CD4-positive, alpha-beta memory T cell (primary cell): ENCODE measurements at regions of chr14 and their contacts with region 1.

Region 1: DNA sequence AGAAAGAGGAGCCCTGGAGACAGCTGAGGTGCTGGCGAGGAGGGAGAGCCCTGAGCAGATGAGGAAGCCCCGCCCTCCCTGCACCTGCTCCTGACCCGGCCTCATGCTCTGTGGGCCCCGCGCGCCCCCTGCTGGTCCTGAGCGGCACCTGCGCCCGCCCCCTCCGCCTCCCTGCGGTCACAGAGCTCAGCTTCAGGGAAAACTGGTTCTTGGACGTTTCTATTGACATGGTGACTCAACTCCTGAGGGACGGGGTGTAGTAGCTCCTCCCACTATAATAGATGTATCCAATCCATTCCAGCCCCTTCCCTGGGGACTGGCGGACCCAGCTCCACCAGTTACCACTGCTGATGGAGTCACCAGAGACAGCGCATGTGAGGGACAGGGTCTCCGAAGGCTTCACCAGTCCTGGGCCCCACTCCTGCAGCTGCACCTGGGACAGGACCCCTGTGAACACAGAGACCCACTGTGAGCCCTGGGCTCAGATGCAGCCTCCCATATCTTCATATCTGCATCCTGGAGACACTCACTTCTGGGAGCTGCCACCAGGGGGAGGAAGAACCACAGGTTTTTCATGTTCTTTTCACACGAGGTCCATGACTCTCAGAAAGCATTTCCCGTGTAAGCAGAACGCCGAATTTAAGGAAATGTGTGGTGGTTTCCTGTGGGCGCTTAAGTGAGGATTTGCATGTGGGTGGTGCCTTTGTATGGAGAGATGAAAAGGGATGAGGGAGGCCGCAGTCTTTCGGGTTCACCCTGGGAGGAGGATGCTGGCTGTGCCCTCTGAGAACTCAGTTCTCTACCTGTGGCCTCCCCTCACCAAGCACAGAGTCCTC is 1346.4 kb downstream of the TMEM121 start:
- DNase-seq: peak; percentile 75 to 80 (median 76)
- H3K4me3 ChIP-seq: no peak overlapping the region
- H3K4me3 Mint-ChIP-seq: peak overlapping the region in 6 of 8 donors; percentile 4 to 70 (median 60)
- H3K27ac ChIP-seq: no peak overlapping the region
- H3K27ac Mint-ChIP-seq: peak overlapping the region in 3 of 7 donors; percentile 22 to 75 (median 50)
- H3K4me1 ChIP-seq: peaks cover 11% of the 10 kb centered on the region
- H3K4me1 Mint-ChIP-seq: peaks cover 8 to 14% (median 11%) of the 10 kb centered on the region in 4 donors
- H3K27me3 ChIP-seq: peaks cover 5% of the 10 kb centered on the region
- H3K27me3 Mint-ChIP-seq: peaks cover 16 to 33% of the 10 kb centered on the region in 2 donors

Region 2: DNA sequence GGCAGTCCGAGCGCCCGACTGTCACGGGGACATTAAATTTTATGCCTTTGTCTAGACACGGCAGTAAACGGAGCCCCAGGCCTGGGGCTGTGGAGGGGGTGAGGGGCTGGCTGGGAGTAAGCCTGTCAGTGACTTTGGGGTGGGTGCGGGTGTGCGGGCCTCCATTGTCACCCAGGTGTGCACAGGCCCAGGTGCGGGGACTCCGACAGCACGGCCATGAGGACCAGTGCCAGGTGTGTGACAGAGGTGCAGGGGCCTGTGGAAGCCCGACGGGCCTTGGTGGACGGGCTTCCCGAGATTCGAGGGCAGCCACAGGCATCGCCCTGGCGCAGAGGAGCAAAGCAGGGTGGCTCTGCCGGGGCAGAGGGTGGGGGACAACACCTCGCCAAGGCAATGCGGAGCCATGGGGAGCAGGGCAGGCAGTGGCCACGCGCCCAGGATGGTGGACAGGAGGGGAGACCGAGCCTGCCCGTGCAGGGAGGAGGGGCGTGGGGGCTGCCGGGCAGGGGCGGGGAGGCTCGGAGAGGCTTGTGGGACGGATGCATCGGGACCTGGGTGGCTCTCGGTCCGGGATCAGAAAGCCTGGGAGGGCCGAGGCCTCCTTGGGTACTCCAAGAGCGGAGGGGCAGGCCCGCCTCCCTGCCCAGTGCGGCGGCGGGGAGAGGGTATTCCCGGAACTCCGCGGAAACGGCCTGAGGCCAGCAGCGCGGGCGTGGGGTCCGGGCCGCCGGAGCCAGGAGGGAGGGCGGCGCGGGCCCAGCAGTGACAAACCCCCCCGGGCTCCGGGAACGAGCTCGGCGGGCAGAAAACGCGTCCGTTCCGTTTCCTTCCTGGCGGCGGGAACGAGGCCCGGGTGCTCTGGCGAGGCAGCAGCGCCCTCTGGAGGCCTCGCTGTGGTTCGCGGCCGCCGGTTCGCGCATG is 1344.9 kb before region 1 on chr14:
- CTCF ChIA-PET with region 1: no interaction called
- POLR2A ChIA-PET with region 1: no interaction called
- intact Hi-C with region 1: no loop called
- DNase-seq: peak; percentile 69 to 83 (median 78)
- H3K4me3 ChIP-seq: peak overlapping the region in 1 of 2 donors; percentile 54
- H3K4me3 Mint-ChIP-seq: peak overlapping the region; percentile 27 to 84 (median 66)
- H3K27ac ChIP-seq: no peak overlapping the region
- H3K27ac Mint-ChIP-seq: peak overlapping the region in 4 of 7 donors; percentile 43 to 83 (median 57)
- H3K4me1 ChIP-seq: peaks cover 29% of the 10 kb centered on the region
- H3K4me1 Mint-ChIP-seq: peaks cover 4 to 41% (median 19%) of the 10 kb centered on the region in 4 donors
- H3K27me3 ChIP-seq: no peaks in the 10 kb centered on the region
- H3K27me3 Mint-ChIP-seq: peaks cover 1 to 2% of the 10 kb centered on the region in 2 donors

Region 3: DNA sequence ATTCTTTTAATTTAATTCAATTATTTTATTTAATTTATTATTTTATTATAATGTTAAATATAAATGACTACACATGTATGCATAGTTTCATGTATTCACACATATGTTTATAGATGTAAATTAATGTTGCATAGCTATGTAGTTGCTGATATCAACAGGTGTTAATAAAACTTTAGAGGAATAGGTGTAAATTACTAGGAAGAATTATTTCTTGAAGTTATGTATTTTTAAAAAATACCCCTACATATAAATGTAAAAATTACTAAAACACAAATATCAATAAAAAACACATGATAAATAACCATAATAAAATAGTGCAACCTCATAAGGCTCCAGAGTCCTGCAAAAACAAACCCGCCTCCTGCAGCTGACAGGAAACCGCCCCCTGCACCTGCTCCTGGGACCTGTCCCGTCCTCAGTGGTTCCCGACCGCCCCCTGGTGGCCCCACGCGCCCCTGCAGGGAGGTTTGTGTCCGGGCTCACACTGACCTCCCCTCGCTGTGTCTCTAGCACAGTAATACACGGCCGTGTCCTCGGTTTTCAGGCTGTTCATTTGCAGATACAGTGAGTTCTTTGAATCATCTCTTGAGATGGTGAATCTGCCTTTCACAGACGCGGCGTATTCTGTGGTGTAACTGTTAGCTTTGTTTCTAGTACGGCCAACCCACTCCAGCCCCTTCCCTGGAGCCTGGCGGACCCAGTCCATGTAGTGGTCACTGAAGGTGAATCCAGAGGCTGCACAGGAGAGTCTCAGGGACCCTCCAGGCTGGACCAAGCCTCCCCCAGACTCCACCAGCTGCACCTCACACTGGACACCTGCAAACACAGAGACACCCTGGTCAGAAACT is 82.4 kb before region 1 on chr14:
- CTCF ChIA-PET with region 1: interaction called, 19 read pairs
- POLR2A ChIA-PET with region 1: no interaction called
- intact Hi-C with region 1: no loop called
- DNase-seq: peak; percentile 47 to 70 (median 54)
- H3K4me3 ChIP-seq: no peak overlapping the region
- H3K4me3 Mint-ChIP-seq: no peak overlapping the region
- H3K27ac ChIP-seq: no peak overlapping the region
- H3K27ac Mint-ChIP-seq: no peak overlapping the region
- H3K4me1 ChIP-seq: peaks cover 10% of the 10 kb centered on the region
- H3K4me1 Mint-ChIP-seq: peaks cover 0 to 13% (median 7%) of the 10 kb centered on the region in 4 donors
- H3K27me3 ChIP-seq: peaks cover 4% of the 10 kb centered on the region
- H3K27me3 Mint-ChIP-seq: peaks cover 9 to 12% of the 10 kb centered on the region in 2 donors

Region 4: DNA sequence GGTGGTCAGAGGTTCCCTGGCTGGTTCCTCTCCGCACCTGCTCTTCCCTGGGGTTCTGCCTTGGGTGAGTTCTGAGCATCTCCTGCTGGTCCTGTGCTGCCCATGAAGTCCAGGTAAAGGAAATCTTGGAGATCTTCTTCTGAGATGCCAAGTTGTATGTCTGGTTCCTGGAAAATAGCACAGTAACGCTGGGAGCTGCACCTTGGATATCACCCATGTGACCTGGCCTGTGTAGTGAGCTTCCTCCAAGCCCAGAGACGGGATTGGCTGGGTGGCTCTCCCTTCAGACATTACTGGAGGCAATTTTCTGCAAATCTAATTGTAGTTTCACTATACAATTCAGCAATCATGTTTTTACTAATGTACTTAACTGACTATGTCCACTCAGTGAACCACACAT is 65.3 kb before region 1 on chr14:
- CTCF ChIA-PET with region 1: no interaction called
- POLR2A ChIA-PET with region 1: no interaction called
- intact Hi-C with region 1: no loop called
- DNase-seq: no peak
- H3K4me3 ChIP-seq: no peak overlapping the region
- H3K4me3 Mint-ChIP-seq: no peak overlapping the region
- H3K27ac ChIP-seq: no peak overlapping the region
- H3K27ac Mint-ChIP-seq: no peak overlapping the region
- H3K4me1 ChIP-seq: peaks cover 10% of the 10 kb centered on the region
- H3K4me1 Mint-ChIP-seq: peaks cover 6 to 11% (median 8%) of the 10 kb centered on the region in 4 donors
- H3K27me3 ChIP-seq: peaks cover 3% of the 10 kb centered on the region
- H3K27me3 Mint-ChIP-seq: peaks cover 10 to 24% of the 10 kb centered on the region in 2 donors

Region 5: DNA sequence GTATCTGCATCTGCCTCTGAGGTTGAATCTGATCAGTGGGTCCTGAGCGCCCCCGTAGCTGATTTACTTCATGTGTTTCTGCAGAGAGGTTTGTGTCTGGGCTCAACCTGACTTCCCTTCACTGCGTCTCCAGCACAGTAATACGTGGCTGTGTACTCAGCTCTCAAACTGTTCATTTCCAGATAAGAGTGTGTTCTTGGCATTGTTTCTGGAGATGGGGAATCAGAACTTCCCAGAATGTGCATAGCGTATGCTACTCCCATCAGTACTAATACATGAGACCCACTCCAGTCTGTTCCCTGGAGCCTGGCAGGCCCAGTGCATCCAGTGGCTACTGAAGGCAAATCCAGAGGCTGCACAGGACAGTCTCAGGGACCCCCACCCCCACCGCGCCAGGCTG is 49.3 kb before region 1 on chr14:
- CTCF ChIA-PET with region 1: interaction called, 11 read pairs
- POLR2A ChIA-PET with region 1: no interaction called
- intact Hi-C with region 1: no loop called
- DNase-seq: no peak
- H3K4me3 ChIP-seq: no peak overlapping the region
- H3K4me3 Mint-ChIP-seq: no peak overlapping the region
- H3K27ac ChIP-seq: no peak overlapping the region
- H3K27ac Mint-ChIP-seq: no peak overlapping the region
- H3K4me1 ChIP-seq: no peaks in the 10 kb centered on the region
- H3K4me1 Mint-ChIP-seq: no peaks in the 10 kb centered on the region
- H3K27me3 ChIP-seq: peaks cover 6% of the 10 kb centered on the region
- H3K27me3 Mint-ChIP-seq: peaks cover 12 to 27% of the 10 kb centered on the region in 2 donors

Region 6: DNA sequence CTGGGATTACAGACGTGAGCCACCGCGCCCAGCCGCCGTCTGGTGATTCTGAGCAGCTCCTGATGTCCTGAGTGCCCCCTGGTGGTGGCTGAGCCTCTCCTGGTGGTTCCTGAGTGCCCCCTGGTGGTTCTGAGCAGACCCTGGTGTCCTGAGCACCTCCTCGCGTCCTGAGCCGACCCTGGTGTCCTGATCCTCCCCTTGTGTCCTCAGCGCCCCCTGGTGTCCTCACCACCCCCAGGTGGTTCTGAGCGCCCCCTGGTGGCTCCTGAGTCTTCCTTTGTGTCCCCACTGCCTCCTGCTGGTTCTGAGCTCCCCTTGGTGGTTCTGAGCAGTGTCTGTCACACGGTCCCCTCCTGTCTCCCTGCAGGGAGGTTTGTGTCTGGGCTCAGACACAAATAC is 41.5 kb before region 1 on chr14:
- CTCF ChIA-PET with region 1: interaction called, 15 read pairs
- POLR2A ChIA-PET with region 1: no interaction called
- intact Hi-C with region 1: no loop called
- DNase-seq: peak; percentile 32 to 60 (median 35)
- H3K4me3 ChIP-seq: no peak overlapping the region
- H3K4me3 Mint-ChIP-seq: no peak overlapping the region
- H3K27ac ChIP-seq: no peak overlapping the region
- H3K27ac Mint-ChIP-seq: peak overlapping the region in 1 of 7 donors; percentile 77
- H3K4me1 ChIP-seq: no peaks in the 10 kb centered on the region
- H3K4me1 Mint-ChIP-seq: no peaks in the 10 kb centered on the region
- H3K27me3 ChIP-seq: no peaks in the 10 kb centered on the region
- H3K27me3 Mint-ChIP-seq: peaks cover 10 to 13% of the 10 kb centered on the region in 2 donors

Region 7: DNA sequence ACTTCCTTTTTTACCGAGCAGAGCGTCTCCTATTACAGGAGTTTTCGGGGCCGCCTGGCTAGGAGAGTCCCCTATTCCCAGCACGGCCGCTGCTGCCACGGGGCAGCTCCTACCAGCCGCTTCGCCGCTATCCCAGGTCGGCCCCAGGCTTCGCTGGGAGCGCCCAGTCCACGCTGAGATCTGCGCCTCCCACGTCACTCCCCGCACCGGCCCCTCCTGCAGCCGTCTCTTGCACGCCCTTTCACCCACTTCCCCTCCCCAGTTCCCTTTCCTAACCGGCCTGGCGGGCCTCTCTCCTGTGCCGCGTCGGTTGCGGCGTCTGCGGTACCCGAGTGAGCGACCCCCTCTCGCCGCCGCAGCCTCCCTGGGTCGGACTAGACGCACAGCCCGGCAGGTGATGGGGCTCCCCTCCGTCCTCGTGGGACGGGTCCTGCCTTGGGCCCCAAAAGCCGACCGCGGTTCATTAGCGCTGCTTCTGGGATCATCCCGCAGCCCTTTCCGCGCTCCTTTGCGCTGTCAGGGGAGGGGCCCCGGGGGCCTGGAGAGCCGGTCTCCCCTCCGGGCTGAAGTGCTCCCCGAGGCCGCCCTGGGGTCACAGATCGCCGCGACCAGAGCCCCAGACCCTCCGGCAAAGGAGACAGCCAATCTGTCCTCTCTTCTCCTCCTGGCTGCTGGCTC is 28.1 kb before region 1 on chr14:
- CTCF ChIA-PET with region 1: interaction called, 31 read pairs
- POLR2A ChIA-PET with region 1: interaction called, 8 read pairs
- intact Hi-C with region 1: loop called (anchors 1 kb)
- DNase-seq: peak; percentile 63 to 77 (median 65)
- H3K4me3 ChIP-seq: peak overlapping the region; percentile 83 to 94
- H3K4me3 Mint-ChIP-seq: peak overlapping the region; percentile 95 to 98 (median 97)
- H3K27ac ChIP-seq: peak overlapping the region; percentile 58
- H3K27ac Mint-ChIP-seq: peak overlapping the region; percentile 75 to 97 (median 93)
- H3K4me1 ChIP-seq: peaks cover 20% of the 10 kb centered on the region
- H3K4me1 Mint-ChIP-seq: peaks cover 12 to 47% (median 21%) of the 10 kb centered on the region in 4 donors
- H3K27me3 ChIP-seq: no peaks in the 10 kb centered on the region
- H3K27me3 Mint-ChIP-seq: no peaks in the 10 kb centered on the region

Region 8: GRCh38 chr14:106850913-106851825 is 21.7 kb before region 1 on chr14:
- CTCF ChIA-PET with region 1: interaction called, 11 read pairs
- POLR2A ChIA-PET with region 1: no interaction called
- intact Hi-C with region 1: no loop called
- DNase-seq: no peak
- H3K4me3 ChIP-seq: no peak overlapping the region
- H3K4me3 Mint-ChIP-seq: no peak overlapping the region
- H3K27ac ChIP-seq: no peak overlapping the region
- H3K27ac Mint-ChIP-seq: no peak overlapping the region
- H3K4me1 ChIP-seq: no peaks in the 10 kb centered on the region
- H3K4me1 Mint-ChIP-seq: peaks cover 0 to 6% (median 3%) of the 10 kb centered on the region in 4 donors
- H3K27me3 ChIP-seq: no peaks in the 10 kb centered on the region
- H3K27me3 Mint-ChIP-seq: peaks cover 0 to 5% of the 10 kb centered on the region in 2 donors